A549 (cell line): ENCODE measurements at regions of chr7 and their contacts with region 1.

Region 1: GRCh38 chr7:2451171-2452073 is 24.8 kb downstream of the GRIFIN start:
- DNase-seq: peak; percentile 83 to 94
- ATAC-seq: peak; percentile 94 to 98
- H3K4me3 ChIP-seq: peak overlapping the region; percentile 39
- H3K27ac ChIP-seq: peak overlapping the region; percentile 84 to 88
- H3K4me1 ChIP-seq: peaks cover 11% of the 10 kb centered on the region
- CTCF ChIP-seq: peak; percentile 85
- EP300 ChIP-seq: no peak
- POLR2A ChIP-seq: no peak
- RAD21 ChIP-seq: peak; percentile 96 to 97

Region 2: DNA sequence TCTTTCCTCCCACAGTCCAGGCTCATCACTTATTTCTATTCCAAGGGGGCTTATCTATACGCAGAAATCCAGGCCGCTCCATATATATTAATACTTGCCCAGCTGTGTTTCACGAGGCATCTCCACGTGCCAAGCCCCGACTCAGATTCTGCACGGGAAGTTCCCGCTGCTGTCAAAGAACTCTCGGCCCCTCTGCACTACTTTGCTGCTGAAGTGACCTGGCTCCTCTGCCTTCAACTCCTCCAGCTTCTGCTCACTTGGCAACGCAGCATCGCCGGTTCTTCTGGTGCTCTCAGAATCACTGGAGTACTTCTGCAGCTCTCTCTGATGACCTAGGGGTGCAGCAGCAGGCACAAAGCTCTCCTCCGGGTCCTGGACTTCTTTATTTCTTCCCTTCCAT is 57.7 kb before region 1 on chr7:
- CTCF ChIA-PET with region 1: no interaction called
- POLR2A ChIA-PET with region 1: no interaction called
- DNase-seq: no peak
- ATAC-seq: no peak
- H3K4me3 ChIP-seq: no peak overlapping the region
- H3K27ac ChIP-seq: no peak overlapping the region
- H3K4me1 ChIP-seq: no peaks in the 10 kb centered on the region
- CTCF ChIP-seq: no peak
- EP300 ChIP-seq: no peak
- POLR2A ChIP-seq: no peak
- RAD21 ChIP-seq: no peak

Region 3: DNA sequence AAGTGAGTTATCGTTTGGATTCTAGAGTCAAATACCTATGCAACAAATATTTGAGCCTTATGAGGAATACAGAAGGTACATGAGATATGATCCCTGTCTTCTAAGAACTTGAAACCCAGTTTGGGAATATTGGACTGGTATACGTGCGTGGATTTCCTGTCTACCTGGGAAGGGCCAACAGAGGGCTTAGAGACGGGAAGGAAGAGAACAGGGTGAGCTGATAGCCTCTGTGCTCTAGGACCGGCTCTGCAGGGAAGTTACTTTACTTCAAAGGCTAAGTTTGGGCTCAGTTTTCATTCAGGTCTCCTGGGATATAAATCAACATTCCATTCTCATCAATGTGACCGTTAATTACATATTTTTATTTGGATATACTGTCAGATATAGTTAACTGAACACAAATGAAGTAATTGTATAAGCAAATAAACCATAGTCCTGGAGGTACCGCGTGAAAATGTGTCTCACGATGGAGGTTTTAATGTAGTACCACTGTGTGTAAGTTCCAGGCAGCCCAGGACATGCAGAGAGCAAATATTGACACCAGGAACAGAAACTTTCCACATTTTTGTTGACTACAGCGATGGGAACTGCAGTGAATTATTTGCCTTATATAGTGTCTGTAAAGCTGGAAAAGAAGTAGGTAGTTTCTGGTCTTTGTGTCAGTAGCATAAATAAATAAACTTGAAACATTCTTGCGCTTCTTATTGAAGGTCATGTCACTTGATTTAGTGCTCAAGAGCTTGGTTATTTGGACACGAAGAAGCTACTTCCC is 39.4 kb before region 1 on chr7:
- CTCF ChIA-PET with region 1: interaction called, 17 read pairs
- POLR2A ChIA-PET with region 1: no interaction called
- DNase-seq: peak in 1 of 2 experiments; percentile 23
- ATAC-seq: peak; percentile 45 to 69; a peak in 3 of 6 replicates
- H3K4me3 ChIP-seq: no peak overlapping the region
- H3K27ac ChIP-seq: 0 out of 6 replicates have a peak overlapping the region, but pooled peaks of 1 of the 2 experiments have one; percentile 16
- H3K4me1 ChIP-seq: peaks cover 20% of the 10 kb centered on the region
- CTCF ChIP-seq: no peak
- EP300 ChIP-seq: no peak
- POLR2A ChIP-seq: no peak
- RAD21 ChIP-seq: no peak

Region 4: DNA sequence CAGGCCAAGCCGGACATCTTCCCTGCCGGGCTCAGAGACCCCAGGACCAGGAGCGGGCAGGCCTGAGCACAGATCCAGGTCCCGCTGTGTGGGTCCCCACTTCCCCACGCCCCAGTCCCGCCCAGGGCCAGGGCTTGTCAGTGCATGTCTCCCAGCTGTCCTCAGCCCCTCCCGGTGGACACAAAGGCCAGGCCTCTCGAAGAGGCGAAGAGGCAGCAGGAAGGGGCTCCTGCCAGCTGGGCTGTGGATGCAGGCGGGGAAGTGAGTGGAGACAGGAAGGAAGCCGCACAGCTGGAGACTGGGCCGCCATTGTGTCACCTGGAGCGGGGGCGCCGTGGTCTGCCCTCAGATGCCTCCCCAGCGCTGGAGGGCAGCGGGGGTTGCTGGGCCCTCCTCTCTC is 20.0 kb after region 1 on chr7:
- CTCF ChIA-PET with region 1: interaction called, 275 read pairs
- POLR2A ChIA-PET with region 1: interaction called, 5 read pairs
- DNase-seq: no peak
- ATAC-seq: no peak; a peak in 1 of 6 replicates
- H3K4me3 ChIP-seq: no peak overlapping the region
- H3K27ac ChIP-seq: peak overlapping the region in 1 of 2 experiments; percentile 74; a peak in 3 of 6 replicates
- H3K4me1 ChIP-seq: peaks cover 9% of the 10 kb centered on the region
- CTCF ChIP-seq: no peak
- EP300 ChIP-seq: no peak
- POLR2A ChIP-seq: no peak
- RAD21 ChIP-seq: no peak

Region 5: DNA sequence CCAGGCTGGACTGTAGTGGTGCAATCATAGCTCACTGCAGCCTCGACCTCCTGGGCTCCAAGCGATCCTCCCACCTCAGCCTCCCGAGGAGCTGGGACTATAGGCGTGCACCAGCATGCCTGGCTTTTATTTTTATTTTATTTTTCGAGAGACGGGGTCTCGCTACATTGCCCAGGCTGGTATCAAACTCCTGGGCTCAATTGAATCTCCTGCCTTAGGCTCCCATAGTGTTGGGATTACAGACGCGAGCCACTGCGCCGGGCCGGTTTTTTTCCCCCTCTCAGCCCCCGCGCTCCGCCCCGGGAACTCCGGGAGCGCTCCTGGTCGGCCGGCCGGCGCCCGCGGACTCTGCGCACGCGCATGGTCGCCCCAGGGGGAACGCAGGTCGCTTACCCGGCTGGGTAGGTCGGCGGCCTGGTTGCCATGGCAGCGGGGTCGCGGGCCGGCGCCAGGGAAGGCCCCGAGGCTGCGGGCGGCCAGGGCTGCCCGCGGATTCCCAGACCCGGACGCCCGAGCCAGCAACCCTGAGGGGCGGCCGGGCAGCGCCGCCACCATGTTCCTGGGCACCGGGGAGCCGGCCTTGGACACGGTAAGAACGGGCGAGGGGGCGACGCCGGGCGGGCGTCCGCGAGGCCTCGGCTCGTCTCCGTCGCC is 107.3 kb after region 1 on chr7 and contains the start of gene IQCE:
- CTCF ChIA-PET with region 1: interaction called, 13 read pairs
- POLR2A ChIA-PET with region 1: no interaction called
- DNase-seq: peak; percentile 77 to 90
- ATAC-seq: peak; percentile 55 to 57
- H3K4me3 ChIP-seq: peak within 1 kb of the TSS; percentile 97
- H3K27ac ChIP-seq: peak within 1 kb of the TSS; percentile 90 to 92
- H3K4me1 ChIP-seq: peaks cover 22% of the 10 kb centered on the region
- CTCF ChIP-seq: no peak
- EP300 ChIP-seq: no peak
- POLR2A ChIP-seq: peak; percentile 25; the same call in 1 of the 2 replicates
- RAD21 ChIP-seq: peak in 1 of 2 experiments; percentile 13; a peak in 1 of 5 replicates
- polyA plus RNA-seq, gene IQCE: 10.1 and 10.6 TPM in 2 replicates

Region 6: GRCh38 chr7:2632733-2633537 is 181.5 kb after region 1 on chr7:
- CTCF ChIA-PET with region 1: interaction called, 4 read pairs
- POLR2A ChIA-PET with region 1: interaction called, 15 read pairs
- DNase-seq: peak; percentile 57 to 63
- ATAC-seq: peak; percentile 35 to 69
- H3K4me3 ChIP-seq: peak overlapping the region; percentile 89
- H3K27ac ChIP-seq: peak overlapping the region; percentile 84 to 95
- H3K4me1 ChIP-seq: peaks cover 33% of the 10 kb centered on the region
- CTCF ChIP-seq: no peak
- EP300 ChIP-seq: no peak
- POLR2A ChIP-seq: peak; percentile 32; the same call in 1 of the 2 replicates
- RAD21 ChIP-seq: no peak

Region 7: DNA sequence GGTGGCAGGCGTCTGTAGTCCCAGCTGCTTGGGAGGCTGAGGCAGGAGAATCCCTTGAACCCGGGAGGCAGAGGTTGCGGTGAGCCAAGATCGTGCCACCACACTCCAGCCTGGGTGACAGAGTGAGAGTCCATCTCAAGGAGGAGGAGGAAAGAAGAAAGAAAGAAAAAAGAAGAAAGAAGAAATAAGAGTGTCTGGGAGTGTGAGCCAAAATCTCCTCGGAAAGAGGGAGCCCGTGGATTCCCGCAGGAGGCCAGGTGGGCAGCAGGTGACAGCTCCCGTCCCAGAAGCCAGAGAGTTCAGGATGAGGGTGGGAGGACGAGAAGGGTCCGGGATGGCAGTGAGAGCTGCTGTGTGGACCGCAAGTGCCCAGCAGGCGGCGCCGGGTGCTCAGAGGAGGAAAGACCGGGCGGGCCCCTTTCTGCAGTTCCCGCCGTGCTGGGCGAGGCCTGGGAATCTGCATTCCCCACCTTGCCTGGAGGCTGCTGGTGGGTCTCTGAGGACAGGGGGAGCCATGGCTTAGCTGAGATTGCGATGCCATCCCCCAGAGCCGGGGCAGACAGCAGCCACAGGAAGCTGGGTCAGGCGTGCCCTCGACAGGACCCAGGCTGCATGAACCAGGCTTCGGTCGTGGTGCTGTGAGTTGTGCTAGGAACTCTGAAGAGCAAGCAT is 219.4 kb after region 1 on chr7:
- CTCF ChIA-PET with region 1: interaction called, 32 read pairs
- POLR2A ChIA-PET with region 1: no interaction called
- DNase-seq: peak; percentile 72 to 83
- ATAC-seq: peak; percentile 86 to 95
- H3K4me3 ChIP-seq: no peak overlapping the region
- H3K27ac ChIP-seq: no peak overlapping the region
- H3K4me1 ChIP-seq: no peaks in the 10 kb centered on the region
- CTCF ChIP-seq: peak; percentile 79
- EP300 ChIP-seq: no peak
- POLR2A ChIP-seq: no peak
- RAD21 ChIP-seq: peak; percentile 83 to 85

Region 8: GRCh38 chr7:2698581-2699288 is 247.3 kb after region 1 on chr7:
- CTCF ChIA-PET with region 1: interaction called, 11 read pairs
- POLR2A ChIA-PET with region 1: no interaction called
- DNase-seq: no peak
- ATAC-seq: no peak
- H3K4me3 ChIP-seq: no peak overlapping the region
- H3K27ac ChIP-seq: no peak overlapping the region
- H3K4me1 ChIP-seq: no peaks in the 10 kb centered on the region
- CTCF ChIP-seq: no peak
- EP300 ChIP-seq: no peak
- POLR2A ChIP-seq: no peak
- RAD21 ChIP-seq: no peak